ENCODE measurements at regions of chr19 and their contacts with region 1.

Region 1: GRCh38 chr19:14366498-14366915 is 14.7 kb upstream of the ADGRE5 start:
- DNase-seq: peak; percentile 82
- H3K4me3 ChIP-seq: no peak overlapping the region
- H3K27ac ChIP-seq: no peak overlapping the region
- H3K4me1 ChIP-seq: peaks cover 22% of the 10 kb centered on the region
- H3K27me3 ChIP-seq: no peaks in the 10 kb centered on the region
- CTCF ChIP-seq: no peak

Region 2: DNA sequence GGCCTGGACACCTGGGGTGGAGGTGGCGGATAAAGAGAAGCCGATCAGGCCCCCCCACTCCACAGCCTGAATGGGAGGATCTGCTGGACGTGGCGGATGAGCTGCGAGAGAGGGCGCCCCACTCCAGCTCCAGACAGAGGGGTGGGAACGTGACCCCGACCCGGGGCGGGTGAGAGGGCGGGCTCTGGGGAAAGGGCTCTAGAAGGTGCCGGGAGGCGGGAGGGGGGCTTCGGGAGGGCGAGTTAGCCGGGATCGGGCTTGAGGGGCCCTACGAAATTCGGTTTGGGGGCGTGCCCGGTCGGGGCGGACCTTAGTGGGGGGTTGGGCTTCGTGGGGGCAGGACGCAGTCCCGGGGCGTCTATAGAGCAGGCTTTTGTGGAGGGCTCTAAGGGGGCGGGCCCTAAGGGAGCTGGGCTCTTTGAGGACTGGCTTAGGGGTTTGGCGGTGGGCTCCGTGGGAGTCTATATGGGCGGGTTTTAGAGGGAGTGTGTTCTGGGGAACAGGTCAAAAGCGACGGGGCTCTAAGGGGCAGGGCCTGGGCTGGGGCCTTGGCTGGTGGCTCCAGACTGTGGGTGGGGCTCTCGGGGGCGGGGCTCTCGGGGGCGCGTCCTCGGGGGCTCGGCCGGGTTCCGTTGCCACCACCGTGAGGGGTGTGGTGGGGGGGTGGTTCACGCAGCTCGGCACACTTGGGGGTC is 493.7 kb before region 1 on chr19:
- CTCF ChIA-PET with region 1: no interaction called
- POLR2A ChIA-PET with region 1: interaction called, 22 read pairs
- intact Hi-C with region 1: no loop called
- DNase-seq: peak; percentile 62
- H3K4me3 ChIP-seq: peak overlapping the region; percentile 30
- H3K27ac ChIP-seq: peak overlapping the region; percentile 23
- H3K4me1 ChIP-seq: peaks cover 13% of the 10 kb centered on the region
- H3K27me3 ChIP-seq: no peaks in the 10 kb centered on the region
- CTCF ChIP-seq: peak; percentile 33; the same call in 1 of the 2 replicates

Region 3: GRCh38 chr19:13929956-13930355 is 436.6 kb before region 1 on chr19:
- CTCF ChIA-PET with region 1: no interaction called
- POLR2A ChIA-PET with region 1: interaction called, 12 read pairs
- intact Hi-C with region 1: no loop called
- DNase-seq: no peak
- H3K4me3 ChIP-seq: no peak overlapping the region
- H3K27ac ChIP-seq: no peak overlapping the region
- H3K4me1 ChIP-seq: no peaks in the 10 kb centered on the region
- H3K27me3 ChIP-seq: no peaks in the 10 kb centered on the region
- CTCF ChIP-seq: no peak

Region 4: DNA sequence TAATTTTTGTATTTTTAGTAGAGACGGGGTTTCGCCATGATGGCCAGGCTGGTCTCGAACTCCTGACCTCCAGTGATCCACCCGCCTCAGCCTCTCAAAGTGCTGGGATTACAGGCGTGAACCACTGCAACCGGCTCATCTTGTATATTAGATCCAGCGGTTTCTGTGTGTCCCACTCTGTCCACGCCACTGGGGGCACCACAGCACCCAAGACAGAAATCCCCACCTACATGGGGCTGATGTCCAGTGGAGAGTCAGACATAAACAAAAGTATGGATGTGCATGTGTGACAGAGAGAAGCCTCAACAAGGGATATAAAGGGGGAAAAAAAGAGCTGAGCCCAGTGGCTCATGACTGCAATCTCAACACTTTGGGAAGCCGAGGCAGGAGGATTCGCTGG is 51.1 kb before region 1 on chr19:
- CTCF ChIA-PET with region 1: interaction called, 3 read pairs
- POLR2A ChIA-PET with region 1: interaction called, 10 read pairs
- intact Hi-C with region 1: no loop called
- DNase-seq: no peak
- H3K4me3 ChIP-seq: no peak overlapping the region
- H3K27ac ChIP-seq: no peak overlapping the region
- H3K4me1 ChIP-seq: no peaks in the 10 kb centered on the region
- H3K27me3 ChIP-seq: no peaks in the 10 kb centered on the region
- CTCF ChIP-seq: 0 out of 2 replicates have a peak, but pooled peaks have one; percentile 21

Region 5: DNA sequence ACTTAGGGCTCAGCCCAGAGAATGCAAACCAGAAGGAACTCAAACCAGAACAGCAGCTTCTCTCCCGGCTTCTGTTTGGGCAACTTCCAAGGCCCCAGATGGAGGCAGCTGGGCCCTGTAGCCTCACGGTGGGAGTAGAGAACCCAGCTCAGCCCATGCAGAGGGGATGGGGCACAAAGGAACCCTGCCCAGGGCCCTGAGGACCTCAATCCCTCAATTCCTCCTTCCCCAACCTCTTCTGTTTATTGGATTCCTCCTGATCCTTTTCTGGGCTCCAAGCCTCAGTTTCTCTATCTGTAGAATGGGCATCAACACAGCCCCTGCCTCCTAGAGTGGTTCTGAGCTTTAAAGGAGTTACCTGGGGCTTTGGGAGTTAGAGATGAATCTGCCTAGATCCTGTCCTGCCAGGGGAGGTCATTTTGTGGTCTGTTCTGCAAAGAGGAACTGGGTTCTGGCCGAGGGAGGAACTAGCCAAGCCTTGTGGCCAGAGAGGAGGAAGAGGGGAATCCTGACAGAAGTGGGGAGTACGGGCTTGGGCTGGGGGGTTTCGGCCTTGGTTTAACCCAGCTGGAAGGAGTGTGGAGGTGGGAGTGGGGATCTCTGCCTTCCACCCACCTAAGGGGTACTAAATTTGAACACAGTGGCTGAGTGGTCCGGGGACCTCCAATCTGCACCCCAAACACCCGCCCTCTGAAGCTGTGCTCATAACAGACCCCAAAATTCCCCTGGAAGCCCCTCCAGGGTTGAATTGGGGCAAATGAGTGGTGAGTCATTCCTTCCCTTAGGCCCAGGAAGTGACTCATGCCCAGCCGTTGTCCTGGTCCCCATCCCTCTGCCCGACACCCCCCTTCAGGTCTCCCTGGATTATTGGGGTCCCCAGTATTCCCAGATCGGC is 17.4 kb after region 1 on chr19:
- CTCF ChIA-PET with region 1: interaction called, 15 read pairs
- POLR2A ChIA-PET with region 1: interaction called, 6 read pairs
- intact Hi-C with region 1: no loop called
- DNase-seq: peak; percentile 66
- H3K4me3 ChIP-seq: peak overlapping the region; percentile 28
- H3K27ac ChIP-seq: peak overlapping the region; percentile 84
- H3K4me1 ChIP-seq: peaks cover 40% of the 10 kb centered on the region
- H3K27me3 ChIP-seq: no peaks in the 10 kb centered on the region
- CTCF ChIP-seq: no peak; the same call in 1 of the 2 replicates

Region 6: DNA sequence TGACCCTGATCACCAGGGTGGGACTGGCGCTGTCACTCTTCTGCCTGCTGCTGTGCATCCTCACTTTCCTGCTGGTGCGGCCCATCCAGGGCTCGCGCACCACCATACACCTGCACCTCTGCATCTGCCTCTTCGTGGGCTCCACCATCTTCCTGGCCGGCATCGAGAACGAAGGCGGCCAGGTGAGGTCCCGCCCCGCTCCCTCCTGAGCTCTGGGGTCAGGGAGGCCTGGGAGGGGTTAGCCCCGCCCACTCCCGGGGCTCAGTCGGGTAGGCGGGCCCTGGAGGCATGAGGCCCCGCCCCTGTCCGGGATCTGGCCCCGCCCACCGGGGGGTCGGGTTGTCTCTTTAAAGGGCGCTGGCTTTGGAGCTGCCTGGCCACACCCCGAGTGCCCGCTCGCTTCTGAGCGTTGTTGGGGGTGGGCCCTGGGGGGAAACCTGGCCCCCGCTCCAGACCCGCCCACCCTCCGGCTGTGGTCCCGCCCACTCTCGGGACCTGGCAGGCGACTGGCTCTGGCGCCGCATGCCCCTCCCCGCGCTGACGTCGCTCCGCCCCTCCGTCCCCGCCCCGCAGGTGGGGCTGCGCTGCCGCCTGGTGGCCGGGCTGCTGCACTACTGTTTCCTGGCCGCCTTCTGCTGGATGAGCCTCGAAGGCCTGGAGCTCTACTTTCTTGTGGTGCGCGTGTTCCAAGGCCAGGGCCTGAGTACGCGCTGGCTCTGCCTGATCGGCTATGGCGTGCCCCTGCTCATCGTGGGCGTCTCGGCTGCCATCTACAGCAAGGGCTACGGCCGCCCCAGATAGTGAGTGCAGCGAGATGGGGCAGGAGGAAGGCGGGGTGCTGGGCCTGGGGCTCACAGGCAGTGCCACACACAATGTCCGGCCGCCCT is 39.5 kb after region 1 on chr19:
- CTCF ChIA-PET with region 1: interaction called, 22 read pairs
- POLR2A ChIA-PET with region 1: no interaction called
- intact Hi-C with region 1: loop called (anchors 2 kb)
- DNase-seq: peak; percentile 92
- H3K4me3 ChIP-seq: peak overlapping the region; percentile 10
- H3K27ac ChIP-seq: no peak overlapping the region
- H3K4me1 ChIP-seq: peaks cover 4% of the 10 kb centered on the region
- H3K27me3 ChIP-seq: no peaks in the 10 kb centered on the region
- CTCF ChIP-seq: peak; percentile 80

Region 7: DNA sequence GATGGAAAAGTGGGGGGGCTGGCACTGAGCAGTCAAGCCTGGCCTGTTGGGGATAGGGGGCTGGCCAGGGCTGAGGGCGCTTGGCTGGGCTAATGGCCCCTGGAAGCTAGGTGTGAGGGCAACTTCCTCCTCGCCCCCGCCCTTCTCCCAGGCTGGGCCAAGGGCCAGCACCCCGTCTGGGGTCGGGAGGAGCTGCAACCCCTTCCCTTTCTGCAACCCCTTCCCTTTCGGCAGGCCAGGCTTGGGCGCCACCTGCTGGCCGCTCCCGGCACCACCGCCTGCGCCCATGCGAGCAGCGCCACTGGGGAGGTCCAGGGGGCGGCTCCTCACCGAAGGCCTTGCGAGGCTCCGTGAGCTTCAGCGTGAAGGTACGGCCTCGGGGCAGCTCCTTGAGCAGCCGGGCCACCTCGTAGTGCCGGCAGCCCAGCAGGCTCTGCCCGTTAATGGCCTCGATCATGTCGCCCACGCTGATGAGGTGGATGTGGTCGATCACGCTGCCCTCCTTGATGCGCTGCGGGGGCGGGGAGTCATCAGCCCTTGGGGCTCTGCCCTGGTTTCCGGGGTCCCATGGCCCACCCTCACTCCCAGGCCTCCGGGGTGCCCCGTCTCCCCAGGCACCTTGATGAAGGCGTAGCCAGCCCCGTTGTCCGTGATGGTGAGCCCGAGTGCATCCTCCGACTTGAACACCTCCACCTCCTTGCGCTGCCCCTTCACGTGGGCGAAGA is 113.6 kb after region 1 on chr19:
- CTCF ChIA-PET with region 1: interaction called, 5 read pairs
- POLR2A ChIA-PET with region 1: no interaction called
- intact Hi-C with region 1: loop called (anchors 5 kb)
- DNase-seq: peak; percentile 74
- H3K4me3 ChIP-seq: no peak overlapping the region
- H3K27ac ChIP-seq: no peak overlapping the region
- H3K4me1 ChIP-seq: peaks cover 32% of the 10 kb centered on the region
- H3K27me3 ChIP-seq: no peaks in the 10 kb centered on the region
- CTCF ChIP-seq: peak; percentile 99

Measured in A673 (cell line).